Thyroid gland (tissue), 4 donors: ENCODE measurements at regions of chr10 and their contacts with region 1.

Region 1: DNA sequence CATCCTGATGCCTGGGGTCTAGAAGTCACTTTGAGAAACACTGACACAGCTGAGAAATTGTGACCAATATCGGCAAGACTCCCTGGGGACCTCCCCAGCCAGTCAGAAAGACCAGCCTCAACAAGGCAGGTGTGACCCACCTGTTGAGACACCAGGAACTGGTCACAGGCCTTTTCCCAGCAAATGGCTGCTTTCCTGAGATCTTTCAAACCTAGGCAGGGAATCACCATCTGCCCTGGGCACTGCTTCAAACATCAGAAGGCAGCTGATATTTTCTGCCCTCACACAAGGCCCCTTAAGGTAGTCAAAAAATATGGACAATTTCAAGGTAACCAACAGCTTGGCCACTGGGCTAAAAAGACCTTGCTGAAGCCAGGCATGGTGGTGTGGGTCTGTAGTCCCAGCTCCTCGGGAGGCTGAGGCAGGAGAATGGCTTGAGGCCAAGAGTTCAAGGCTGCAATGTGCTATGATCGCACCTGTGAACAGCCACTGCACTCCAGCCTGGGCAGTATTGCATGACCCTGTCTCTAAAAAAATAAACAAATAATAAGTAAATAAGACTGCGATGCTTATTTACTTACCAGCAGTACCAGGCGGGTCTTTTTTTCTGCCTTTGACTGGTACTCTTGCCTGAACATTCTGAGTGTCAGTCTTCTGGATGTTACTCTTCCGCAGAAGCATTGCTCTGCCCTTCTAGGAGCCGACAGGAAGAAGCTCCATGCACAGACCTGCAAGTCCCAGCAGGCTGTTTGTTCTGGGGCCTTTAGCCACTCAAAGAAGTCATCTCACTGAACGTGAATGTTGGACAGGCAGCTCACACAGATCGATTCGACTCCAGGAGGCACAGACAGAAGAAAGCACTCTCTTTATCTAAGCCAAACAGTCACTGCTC is 59.7 kb downstream of the SORBS1 start:
- DNase-seq: no peak
- H3K4me3 ChIP-seq: no peak overlapping the region
- H3K27ac ChIP-seq: no peak overlapping the region
- H3K4me1 ChIP-seq: peaks cover 0 to 11% of the 10 kb centered on the region in 2 donors
- H3K27me3 ChIP-seq: no peaks in the 10 kb centered on the region
- CTCF ChIP-seq: no peak
- POLR2A ChIP-seq: no peak

Region 2: DNA sequence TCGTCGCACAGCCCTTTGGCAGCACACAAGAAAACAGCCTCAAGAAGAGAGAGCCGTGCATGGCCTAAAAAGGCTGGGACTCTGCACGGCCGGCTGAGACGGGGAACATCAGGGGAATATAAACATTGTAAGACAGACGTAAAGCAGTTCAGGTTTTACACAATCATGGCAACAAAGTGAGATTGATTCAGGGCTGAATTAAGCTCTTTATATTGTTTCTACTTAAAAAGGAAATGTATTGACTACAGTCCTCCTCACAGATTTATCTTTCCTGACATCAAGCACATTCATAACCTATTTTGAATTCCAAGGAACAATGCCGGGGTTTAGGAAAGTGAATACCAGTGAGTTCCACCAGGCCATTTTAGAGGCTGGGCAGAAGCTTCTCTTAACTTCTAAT is 34.6 kb after region 1 on chr10:
- intact Hi-C with region 1: loop called (anchors 5 kb)
- DNase-seq: no peak
- H3K4me3 ChIP-seq: no peak overlapping the region
- H3K27ac ChIP-seq: no peak overlapping the region
- H3K4me1 ChIP-seq: no peaks in the 10 kb centered on the region
- H3K27me3 ChIP-seq: no peaks in the 10 kb centered on the region
- CTCF ChIP-seq: no peak
- POLR2A ChIP-seq: no peak

Region 3: DNA sequence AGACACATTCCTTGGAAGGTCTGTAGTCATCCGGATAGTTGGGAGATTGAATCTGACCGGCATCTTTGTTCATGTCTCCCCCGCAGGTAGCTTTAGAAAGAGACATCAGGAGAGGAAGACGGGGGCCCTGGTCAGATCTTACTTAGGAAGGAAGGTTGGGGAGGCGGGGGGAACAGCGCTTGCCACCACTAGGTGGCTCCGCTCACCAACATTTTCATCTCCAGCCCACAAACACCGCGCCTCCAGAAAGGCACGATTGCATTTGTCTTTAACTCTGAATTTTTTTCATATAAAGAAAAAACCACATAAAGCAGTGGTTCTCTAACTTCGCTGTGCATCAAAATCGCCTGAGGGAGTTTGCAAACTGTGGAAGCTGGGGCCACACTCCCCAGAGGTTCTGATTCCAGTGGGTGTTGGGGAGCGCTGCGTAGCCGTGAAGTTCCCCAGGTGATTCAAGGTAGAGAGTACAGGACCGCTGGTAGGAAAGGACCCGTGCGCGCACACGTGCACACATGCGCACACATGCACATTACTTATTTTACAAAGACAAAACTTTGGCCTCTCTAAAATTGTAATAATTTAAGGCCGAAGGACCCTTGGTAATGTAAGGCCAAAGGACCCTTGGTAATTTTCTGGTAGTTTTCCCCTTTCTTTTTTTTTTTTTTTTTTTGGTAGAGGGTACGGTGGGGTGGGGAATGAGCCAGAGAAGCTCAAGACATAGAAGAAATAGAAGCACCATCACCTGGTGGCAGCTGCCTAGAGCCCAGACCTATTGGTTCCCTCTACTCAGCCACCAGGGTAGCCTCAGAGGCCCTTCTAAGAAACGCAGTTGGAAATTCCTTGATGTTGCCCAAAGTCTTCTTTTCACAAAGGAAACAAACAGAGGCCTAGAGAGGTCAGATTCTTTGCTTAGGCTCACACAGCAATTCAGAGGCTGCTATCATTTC is 894.8 kb after region 1 on chr10:
- intact Hi-C with region 1: no loop called
- DNase-seq: peak; percentile 69 to 73
- H3K4me3 ChIP-seq: no peak overlapping the region
- H3K27ac ChIP-seq: no peak overlapping the region
- H3K4me1 ChIP-seq: no peaks in the 10 kb centered on the region
- H3K27me3 ChIP-seq: no peaks in the 10 kb centered on the region
- CTCF ChIP-seq: peak; percentile 65 to 88 (median 73)
- POLR2A ChIP-seq: no peak